ENCODE measurements at regions of chr2 and their contacts with region 1.

Region 1: GRCh38 chr2:200864176-200864976 is at the start of gene CLK1:
- H3K4me3 ChIP-seq: peak within 1 kb of the TSS; percentile 95
- H3K27ac ChIP-seq: peak within 1 kb of the TSS; percentile 97
- H3K4me1 ChIP-seq: peaks cover 12% of the 10 kb centered on the region; the same call in 1 of the 2 replicates
- CTCF ChIP-seq: peak; percentile 32; the same call in 1 of the 2 replicates

Region 2: DNA sequence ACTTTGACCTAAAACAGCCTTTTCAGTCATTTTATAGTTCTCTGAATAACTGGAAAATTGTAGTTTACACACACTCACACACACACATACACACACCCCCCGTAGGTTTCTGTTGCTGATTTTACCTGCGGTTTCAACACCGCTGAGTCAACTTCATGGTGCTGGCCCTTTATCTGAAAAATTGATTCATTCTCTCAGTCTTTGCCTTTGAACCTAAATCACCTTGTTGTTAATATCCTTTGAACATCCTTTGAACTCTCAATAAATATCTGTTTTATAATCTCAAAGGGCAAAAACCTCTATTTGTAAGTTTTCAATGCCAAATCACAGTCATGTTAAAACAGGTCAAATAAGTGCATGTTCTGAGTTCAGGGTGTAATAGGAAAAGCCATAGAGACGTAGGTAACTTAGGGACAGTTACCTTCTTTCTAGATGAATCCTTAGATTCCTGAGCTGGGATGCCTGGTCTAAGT is 161.7 kb before region 1 on chr2:
- CTCF ChIA-PET with region 1: no interaction called
- POLR2A ChIA-PET with region 1: no interaction called
- H3K4me3 ChIP-seq: no peak overlapping the region
- H3K27ac ChIP-seq: no peak overlapping the region
- H3K4me1 ChIP-seq: peaks cover 2% of the 10 kb centered on the region; the same call in 1 of the 2 replicates
- CTCF ChIP-seq: no peak

Region 3: GRCh38 chr2:200713003-200713703 is 151.2 kb before region 1 on chr2:
- CTCF ChIA-PET with region 1: interaction called, 5 read pairs
- POLR2A ChIA-PET with region 1: interaction called, 16 read pairs
- H3K4me3 ChIP-seq: peak overlapping the region; percentile 25
- H3K27ac ChIP-seq: peak overlapping the region; percentile 2; the same call in 1 of the 2 replicates
- H3K4me1 ChIP-seq: no peaks in the 10 kb centered on the region
- CTCF ChIP-seq: peak; percentile 76

Region 4: GRCh38 chr2:200811336-200812121 is 52.8 kb before region 1 on chr2 and contains the start of gene BZW1:
- CTCF ChIA-PET with region 1: interaction called, 3 read pairs
- POLR2A ChIA-PET with region 1: interaction called, 15 read pairs
- H3K4me3 ChIP-seq: peak within 1 kb of the TSS; percentile 91
- H3K27ac ChIP-seq: peak within 1 kb of the TSS; percentile 92
- H3K4me1 ChIP-seq: no peaks in the 10 kb centered on the region
- CTCF ChIP-seq: no peak

Region 5: DNA sequence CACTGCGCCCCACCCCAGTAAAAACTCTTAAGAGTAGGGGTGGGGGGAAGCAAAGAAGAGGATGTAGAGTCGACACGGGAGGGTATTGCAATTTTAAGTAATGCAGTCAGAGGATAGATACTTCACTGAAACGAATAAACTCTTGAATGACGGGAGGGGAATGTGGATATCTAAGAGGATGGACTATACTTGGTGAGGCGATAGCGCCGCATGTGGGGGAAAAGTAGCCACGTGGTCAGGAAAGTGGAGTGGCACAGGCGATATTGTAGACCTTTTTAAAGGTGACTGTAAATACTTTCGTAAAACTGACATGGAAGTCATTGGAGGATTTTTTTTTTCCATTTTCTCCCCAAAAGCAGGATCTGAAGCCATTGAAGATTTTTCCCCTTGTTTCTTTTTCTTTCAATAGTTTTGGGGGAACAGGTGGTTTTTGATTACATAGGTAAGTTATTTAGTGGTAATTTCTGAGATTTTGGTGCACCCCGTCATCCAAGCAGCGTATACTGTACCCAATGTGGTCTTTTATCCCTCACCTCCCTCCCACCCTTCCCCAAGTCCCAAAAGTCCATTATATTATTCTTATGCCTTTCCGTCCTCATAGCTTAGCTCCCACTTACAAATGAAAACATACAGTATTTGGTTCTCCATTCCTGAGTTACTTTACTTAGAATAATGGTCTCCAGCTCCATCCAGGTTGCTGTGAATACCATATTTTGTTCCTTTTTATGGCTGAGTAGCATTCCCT is 13.7 kb before region 1 on chr2:
- CTCF ChIA-PET with region 1: no interaction called
- POLR2A ChIA-PET with region 1: interaction called, 12 read pairs
- H3K4me3 ChIP-seq: no peak overlapping the region
- H3K27ac ChIP-seq: no peak overlapping the region
- H3K4me1 ChIP-seq: no peaks in the 10 kb centered on the region
- CTCF ChIP-seq: no peak

Region 6: GRCh38 chr2:200888704-200889625 is 24.6 kb after region 1 on chr2 and contains the starts of genes NIF3L1 and PPIL3:
- CTCF ChIA-PET with region 1: no interaction called
- POLR2A ChIA-PET with region 1: interaction called, 36 read pairs
- H3K4me3 ChIP-seq: peak within 1 kb of the TSS; percentile 79
- H3K27ac ChIP-seq: peak within 1 kb of the TSS; percentile 91
- H3K4me1 ChIP-seq: peaks cover 5% of the 10 kb centered on the region
- CTCF ChIP-seq: no peak

Region 7: DNA sequence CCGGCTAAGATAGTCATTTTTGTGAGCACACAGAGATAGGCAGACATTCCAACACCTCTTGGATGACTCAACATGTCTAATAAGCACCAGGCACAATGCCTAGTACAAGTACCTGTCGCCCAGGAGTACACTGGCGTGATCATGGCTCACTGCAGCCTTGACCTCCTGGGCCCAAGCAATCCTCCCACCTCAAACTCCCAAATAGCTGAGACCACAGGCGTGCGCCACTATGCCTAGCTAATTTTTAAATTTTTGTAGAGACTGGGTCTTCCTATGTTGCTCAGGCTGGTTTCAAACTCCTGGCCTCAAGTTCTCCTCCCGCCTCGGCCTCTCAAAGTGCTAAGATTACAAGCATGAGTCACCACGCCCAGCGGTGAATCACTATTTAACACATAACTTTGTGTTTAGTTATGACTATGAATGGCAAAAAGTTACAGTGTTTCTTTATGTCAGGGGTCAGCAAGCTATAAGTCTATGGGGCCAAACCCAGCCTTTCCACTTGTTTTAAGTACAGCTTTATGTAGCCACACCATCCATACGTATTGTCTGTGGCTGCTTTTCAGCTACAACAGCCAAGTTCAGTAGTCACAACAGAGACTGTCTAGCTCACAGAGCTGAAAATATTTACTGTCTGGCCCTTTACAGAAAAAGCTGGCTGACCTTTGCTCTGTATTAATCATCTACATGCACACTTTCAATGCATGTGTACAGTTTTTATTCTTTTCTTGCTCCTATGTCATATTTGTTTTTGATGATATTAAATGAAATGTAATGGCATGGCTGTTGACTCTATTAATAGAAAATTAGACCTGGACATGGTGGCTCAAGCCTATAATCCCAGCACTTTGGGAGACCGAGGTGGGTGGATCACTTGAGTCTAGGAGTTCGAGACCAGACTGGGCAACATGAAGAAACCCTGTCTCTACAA is 80.4 kb after region 1 on chr2:
- CTCF ChIA-PET with region 1: no interaction called
- POLR2A ChIA-PET with region 1: no interaction called
- H3K4me3 ChIP-seq: no peak overlapping the region
- H3K27ac ChIP-seq: no peak overlapping the region
- H3K4me1 ChIP-seq: no peaks in the 10 kb centered on the region
- CTCF ChIP-seq: no peak

Region 8: DNA sequence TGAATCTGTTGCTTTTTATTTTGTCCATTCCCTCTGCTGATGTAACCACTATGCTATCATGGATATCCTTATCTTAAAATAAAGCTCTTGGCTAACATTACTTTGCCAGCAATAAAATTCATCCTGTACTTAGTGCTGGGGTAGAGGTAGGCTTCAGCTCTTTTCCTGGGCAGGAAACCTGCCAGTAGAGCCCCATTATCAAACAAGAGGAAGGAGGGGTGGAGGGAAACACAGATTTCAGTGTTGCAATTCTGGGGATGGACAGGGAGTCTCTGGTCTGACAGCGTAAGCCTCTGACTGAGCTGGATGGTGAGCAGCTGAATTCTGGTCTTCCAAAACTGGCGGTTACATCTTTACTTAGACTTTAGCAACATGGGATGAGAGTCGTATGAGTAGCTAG is 443.5 kb after region 1 on chr2:
- CTCF ChIA-PET with region 1: no interaction called
- POLR2A ChIA-PET with region 1: no interaction called
- H3K4me3 ChIP-seq: no peak overlapping the region
- H3K27ac ChIP-seq: no peak overlapping the region
- H3K4me1 ChIP-seq: no peaks in the 10 kb centered on the region
- CTCF ChIP-seq: no peak

Region 9: DNA sequence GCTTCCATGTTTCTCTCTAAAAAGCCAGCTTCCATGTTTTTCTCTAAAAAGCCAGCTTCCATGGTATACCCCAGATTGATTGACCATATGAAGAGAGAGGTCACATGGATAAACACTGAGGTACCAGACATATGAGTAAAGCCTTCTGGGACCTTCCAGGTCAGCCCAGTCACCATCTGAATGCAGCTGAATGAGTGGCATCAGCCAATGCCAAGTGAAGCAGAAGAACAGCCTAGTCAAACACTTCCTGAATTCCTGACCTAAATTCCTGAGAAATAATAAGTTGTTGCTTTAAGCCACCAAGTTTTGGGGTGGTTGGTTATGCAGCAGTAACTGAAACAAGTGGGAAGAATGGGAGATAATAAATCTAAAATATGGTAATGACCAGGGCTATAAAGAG is 922.1 kb after region 1 on chr2:
- CTCF ChIA-PET with region 1: no interaction called
- POLR2A ChIA-PET with region 1: no interaction called
- H3K4me3 ChIP-seq: no peak overlapping the region
- H3K27ac ChIP-seq: no peak overlapping the region
- H3K4me1 ChIP-seq: no peaks in the 10 kb centered on the region
- CTCF ChIP-seq: no peak